HCT116 (cell line): ENCODE measurements at regions of chr1 and their contacts with region 1.

Region 1: DNA sequence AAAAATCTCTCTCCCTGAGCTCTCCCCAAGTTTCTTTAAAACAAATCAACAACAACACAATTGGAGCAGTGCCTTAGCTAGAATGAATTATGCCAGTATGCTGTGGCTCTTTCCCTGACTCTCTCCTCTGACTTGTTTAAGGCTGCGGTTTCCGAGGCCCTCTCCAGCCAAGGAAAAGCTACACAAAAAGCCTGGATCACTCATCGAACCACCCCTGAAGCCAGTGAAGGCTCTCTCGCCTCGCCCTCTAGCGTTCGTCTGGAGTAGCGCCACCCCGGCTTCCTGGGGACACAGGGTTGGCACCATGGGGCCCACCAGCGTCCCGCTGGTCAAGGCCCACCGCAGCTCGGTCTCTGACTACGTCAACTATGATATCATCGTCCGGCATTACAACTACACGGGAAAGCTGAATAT is 1.9 kb downstream of the S1PR1 start:
- DNase-seq: peak; percentile 71
- ATAC-seq: peak; percentile 90
- H3K4me3 ChIP-seq: no peak overlapping the region
- H3K27ac ChIP-seq: no peak overlapping the region
- H3K4me1 ChIP-seq: peaks cover 4 to 17% of the 10 kb centered on the region in 2 experiments; a peak in 2 of 4 replicates
- H3K27me3 ChIP-seq: no peaks in the 10 kb centered on the region
- CTCF ChIP-seq: peak; percentile 66 to 96 (median 93)
- POLR2A ChIP-seq: no peak
- RAD21 ChIP-seq: peak; percentile 76

Region 2: DNA sequence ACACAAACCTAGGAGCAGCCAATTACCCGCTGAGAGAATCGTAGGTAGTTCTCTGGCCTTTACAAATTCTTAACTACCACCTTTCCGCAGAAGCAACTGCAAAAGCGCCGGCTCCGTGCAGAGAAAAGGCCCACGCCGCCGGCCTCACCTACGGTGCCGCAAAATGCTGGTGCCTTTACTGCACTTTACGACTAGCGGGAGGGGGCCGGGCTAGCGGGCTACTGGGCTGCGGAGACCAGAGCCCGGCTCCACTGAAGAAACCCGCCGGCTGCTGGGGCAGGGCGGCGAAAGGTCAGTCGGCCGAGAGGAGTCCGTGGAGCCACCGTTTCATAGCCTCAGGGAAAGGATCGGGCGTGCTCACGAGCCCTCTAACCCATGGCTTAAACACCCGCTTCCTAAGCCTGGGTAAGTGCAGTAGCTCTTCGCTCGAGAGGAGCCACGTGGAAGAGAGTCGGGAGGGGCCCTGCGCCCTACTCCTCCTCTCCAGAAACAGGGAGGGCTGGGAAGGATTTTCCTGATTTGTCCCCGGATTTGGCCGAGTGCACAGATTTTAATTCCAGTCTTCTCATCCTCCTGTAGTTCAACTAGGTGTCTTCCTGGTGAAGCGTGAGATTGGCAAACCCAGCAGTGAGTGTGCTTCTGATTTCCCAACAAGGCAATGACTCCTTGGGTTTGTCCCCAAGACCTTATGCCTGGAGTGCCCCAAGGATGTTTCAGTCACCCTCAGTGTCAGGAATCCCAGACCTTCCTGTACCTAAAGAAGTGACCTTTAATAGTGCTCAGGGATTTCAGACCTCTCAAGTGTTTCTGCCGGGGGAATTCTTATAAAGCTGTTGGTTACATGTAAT is 212.8 kb before region 1 on chr1 and contains the start of gene DPH5:
- CTCF ChIA-PET with region 1: no interaction called
- POLR2A ChIA-PET with region 1: no interaction called
- RAD21 ChIA-PET with region 1: no interaction called
- intact Hi-C with region 1: loop called (anchors 10 kb)
- DNase-seq: peak; percentile 82
- ATAC-seq: peak; percentile 91
- H3K4me3 ChIP-seq: peak within 1 kb of the TSS; percentile 89 to 92
- H3K27ac ChIP-seq: peak within 1 kb of the TSS; percentile 49
- H3K4me1 ChIP-seq: peaks cover 4 to 12% of the 10 kb centered on the region in 2 experiments; a peak in 3 of 4 replicates
- H3K27me3 ChIP-seq: no peaks in the 10 kb centered on the region
- CTCF ChIP-seq: no peak
- POLR2A ChIP-seq: peak; percentile 81
- RAD21 ChIP-seq: no peak
- total RNA-seq, gene DPH5: 55.8 TPM

Region 3: GRCh38 chr1:101738475-101738874 is 499.8 kb after region 1 on chr1:
- CTCF ChIA-PET with region 1: no interaction called
- POLR2A ChIA-PET with region 1: no interaction called
- RAD21 ChIA-PET with region 1: no interaction called
- intact Hi-C with region 1: no loop called
- DNase-seq: no peak
- ATAC-seq: no peak
- H3K4me3 ChIP-seq: no peak overlapping the region
- H3K27ac ChIP-seq: no peak overlapping the region
- H3K4me1 ChIP-seq: no peaks in the 10 kb centered on the region
- H3K27me3 ChIP-seq: no peaks in the 10 kb centered on the region
- CTCF ChIP-seq: no peak
- POLR2A ChIP-seq: no peak
- RAD21 ChIP-seq: no peak

Region 4: GRCh38 chr1:102776071-102776470 is 1537.4 kb after region 1 on chr1:
- CTCF ChIA-PET with region 1: no interaction called
- POLR2A ChIA-PET with region 1: no interaction called
- RAD21 ChIA-PET with region 1: no interaction called
- intact Hi-C with region 1: no loop called
- DNase-seq: no peak
- ATAC-seq: no peak
- H3K4me3 ChIP-seq: no peak overlapping the region
- H3K27ac ChIP-seq: no peak overlapping the region
- H3K4me1 ChIP-seq: no peaks in the 10 kb centered on the region
- H3K27me3 ChIP-seq: no peaks in the 10 kb centered on the region
- CTCF ChIP-seq: no peak
- POLR2A ChIP-seq: no peak
- RAD21 ChIP-seq: no peak